GM18951 (cell line): ENCODE measurements at regions of chr6 and their contacts with region 1.

Region 1: DNA sequence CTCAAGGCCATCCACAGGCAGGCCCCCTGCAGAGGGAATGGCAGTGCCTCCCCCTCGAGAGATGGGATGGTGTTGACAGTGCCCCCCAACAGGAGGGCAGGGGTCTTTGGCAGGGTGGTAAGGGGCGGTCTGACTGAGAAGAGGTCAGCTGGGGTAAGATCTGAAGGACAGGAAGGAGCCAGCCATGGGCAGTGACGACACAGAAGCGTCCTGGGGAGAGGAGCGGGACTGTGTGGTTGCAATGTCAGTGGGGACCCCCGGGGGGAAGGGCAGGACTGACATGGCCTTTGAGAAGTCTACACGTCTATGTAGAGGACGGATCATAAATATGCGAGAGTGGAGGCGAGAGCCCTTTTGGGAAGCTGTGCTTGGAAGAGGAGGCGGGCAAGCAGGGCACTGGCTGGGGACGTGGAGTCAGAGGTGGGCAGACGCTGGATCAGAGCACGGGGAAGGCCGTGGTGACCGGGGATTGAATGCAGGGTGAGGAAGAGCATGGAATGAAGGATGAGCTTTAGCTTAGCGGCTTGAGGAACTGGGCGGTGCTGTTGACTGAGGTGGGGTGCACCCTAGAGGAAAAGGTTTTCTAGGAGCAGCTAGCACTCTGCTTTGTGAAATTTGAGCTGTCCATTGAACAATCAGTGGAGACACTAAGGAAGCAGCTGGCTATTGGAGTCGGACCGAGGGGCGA is 82.5 kb upstream of the AGPAT4 start:
- POLR2A ChIP-seq: no peak

Region 2: DNA sequence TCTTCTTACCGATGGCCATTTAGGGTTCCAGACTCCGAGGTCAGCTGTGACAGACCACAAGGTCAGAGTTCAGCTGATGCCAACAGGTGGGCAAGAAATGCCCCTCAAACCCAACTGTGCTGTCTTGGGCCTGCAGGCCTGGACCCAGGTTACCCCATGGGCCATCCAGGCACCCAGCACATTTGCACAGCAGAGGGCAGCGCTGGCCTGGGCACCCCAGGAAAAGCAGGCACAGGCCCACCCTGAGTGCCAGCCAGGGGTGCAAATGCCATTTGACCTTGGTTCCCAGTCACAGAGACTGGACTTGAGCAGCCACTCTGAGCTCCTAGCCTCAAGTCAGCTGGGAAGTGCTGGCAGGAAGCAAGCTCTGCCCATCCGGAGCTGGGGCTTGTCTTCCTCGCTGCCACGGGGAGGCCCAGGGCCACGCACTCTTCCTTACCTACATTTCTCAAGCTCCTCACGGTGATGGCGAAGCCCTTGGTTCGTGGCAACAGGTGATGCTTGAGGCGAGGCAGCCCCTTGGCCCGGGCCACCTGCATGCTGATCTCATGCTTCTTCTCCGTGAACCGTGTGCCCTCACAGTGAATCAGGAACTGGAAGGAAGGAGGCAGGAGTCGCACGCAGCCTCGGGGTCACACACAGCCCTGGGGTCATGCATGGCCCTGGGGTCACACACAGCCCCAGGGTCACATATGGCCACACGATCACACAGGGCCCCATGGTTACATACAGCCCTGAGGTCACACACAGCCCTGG is 203.2 kb before region 1 on chr6:
- in situ Hi-C with region 1: loop called (anchors 5 kb)
- POLR2A ChIP-seq: no peak

Region 3: GRCh38 chr6:161836643-161837448 is 480.5 kb after region 1 on chr6:
- in situ Hi-C with region 1: no loop called
- POLR2A ChIP-seq: no peak

Region 4: GRCh38 chr6:162572240-162572639 is 1215.9 kb after region 1 on chr6:
- in situ Hi-C with region 1: no loop called
- POLR2A ChIP-seq: no peak